IMR-90 (cell line): ENCODE measurements at regions of chr22 and their contacts with region 1.

Region 1: GRCh38 chr22:27880778-27881394 is 38.2 kb downstream of the PITPNB start:
- DNase-seq: peak; percentile 86
- ATAC-seq: peak; percentile 68
- H3K4me3 ChIP-seq: no peak overlapping the region
- H3K27ac ChIP-seq: peak overlapping the region; percentile 67; the same call in 1 of the 2 replicates
- H3K4me1 ChIP-seq: peaks cover 31% of the 10 kb centered on the region
- H3K27me3 ChIP-seq: no peaks in the 10 kb centered on the region
- CTCF ChIP-seq: peak; percentile 84
- POLR2A ChIP-seq: peak; percentile 46; the same call in 1 of the 2 replicates
- RAD21 ChIP-seq: peak; percentile 90

Region 2: DNA sequence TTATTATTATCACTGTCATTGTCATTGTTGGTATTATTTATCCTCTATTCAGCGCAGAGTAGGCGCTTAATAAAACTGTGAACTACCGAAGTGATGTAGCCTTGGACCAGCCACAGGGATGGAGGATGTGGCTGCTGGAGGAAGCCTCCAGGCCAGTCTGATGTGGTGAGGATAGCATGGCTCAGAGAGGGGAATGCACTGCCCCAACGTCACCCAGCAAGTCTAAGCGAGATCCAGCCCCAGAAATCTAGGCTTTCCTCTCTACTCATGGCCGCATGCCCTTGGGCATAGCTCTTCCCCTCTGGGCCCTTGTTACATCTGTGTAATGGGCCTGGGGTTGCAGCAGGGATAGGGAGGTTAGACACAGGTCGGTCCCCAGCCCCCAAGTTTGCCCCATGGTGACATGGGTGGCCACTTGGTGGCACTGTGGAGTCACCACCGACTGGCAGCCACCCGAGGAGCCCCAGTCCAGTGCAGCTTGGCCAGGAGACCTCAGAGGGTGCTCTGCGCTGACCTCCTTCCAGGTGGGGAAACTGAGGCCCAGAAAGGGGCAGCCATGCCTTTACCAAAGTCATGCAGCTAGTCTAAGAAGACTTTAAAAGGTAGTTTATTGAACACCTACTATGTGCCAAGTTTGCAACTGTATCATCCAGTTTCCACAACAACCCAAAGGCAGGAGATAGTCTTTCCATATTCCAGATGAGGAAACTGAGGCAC is 475.1 kb before region 1 on chr22:
- CTCF ChIA-PET with region 1: no interaction called
- POLR2A ChIA-PET with region 1: no interaction called
- dilution Hi-C with region 1: no loop called
- in situ Hi-C with region 1: no loop called
- intact Hi-C with region 1: loop called (anchors 5 kb)
- DNase-seq: peak; percentile 45
- ATAC-seq: peak; percentile 95
- H3K4me3 ChIP-seq: no peak overlapping the region
- H3K27ac ChIP-seq: no peak overlapping the region
- H3K4me1 ChIP-seq: no peaks in the 10 kb centered on the region
- H3K27me3 ChIP-seq: peaks cover 14% of the 10 kb centered on the region
- CTCF ChIP-seq: peak; percentile 79
- POLR2A ChIP-seq: peak; percentile 28; the same call in 1 of the 2 replicates
- RAD21 ChIP-seq: peak; percentile 93

Region 3: DNA sequence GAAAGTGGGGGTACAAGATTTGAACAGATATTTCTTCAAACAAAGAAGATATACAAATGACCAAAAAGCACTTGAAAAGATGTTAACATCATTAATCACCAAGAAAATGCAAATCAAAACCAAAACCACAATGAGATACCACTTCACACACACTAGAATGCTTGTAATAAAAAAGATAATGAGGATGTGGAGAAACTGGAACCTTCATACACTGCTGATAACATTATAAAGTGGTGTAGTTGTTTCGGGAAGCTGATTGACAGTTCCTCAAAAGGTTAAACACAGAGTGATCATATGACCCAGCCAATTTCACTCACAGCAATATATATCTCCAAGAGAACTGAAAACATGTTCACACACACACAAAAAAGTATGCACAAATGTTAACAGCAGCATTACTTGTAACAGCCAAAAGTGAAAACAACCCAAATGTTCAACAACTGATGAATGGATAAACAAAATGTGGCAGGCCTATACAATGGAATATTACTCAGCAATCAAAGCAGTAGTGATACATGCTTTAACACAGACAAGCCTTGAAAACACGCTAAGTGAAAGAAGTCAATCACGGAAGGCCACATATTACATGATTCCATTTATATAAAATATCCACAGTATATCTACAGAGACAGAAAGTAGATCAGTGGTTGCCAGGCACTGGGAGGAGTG is 23.1 kb after region 1 on chr22:
- CTCF ChIA-PET with region 1: interaction called, 3 read pairs
- POLR2A ChIA-PET with region 1: interaction called, 10 read pairs
- dilution Hi-C with region 1: no loop called
- in situ Hi-C with region 1: no loop called
- intact Hi-C with region 1: no loop called
- DNase-seq: no peak
- ATAC-seq: no peak
- H3K4me3 ChIP-seq: no peak overlapping the region
- H3K27ac ChIP-seq: no peak overlapping the region
- H3K4me1 ChIP-seq: peaks cover 6% of the 10 kb centered on the region
- H3K27me3 ChIP-seq: no peaks in the 10 kb centered on the region
- CTCF ChIP-seq: no peak
- POLR2A ChIP-seq: no peak
- RAD21 ChIP-seq: no peak

Region 4: DNA sequence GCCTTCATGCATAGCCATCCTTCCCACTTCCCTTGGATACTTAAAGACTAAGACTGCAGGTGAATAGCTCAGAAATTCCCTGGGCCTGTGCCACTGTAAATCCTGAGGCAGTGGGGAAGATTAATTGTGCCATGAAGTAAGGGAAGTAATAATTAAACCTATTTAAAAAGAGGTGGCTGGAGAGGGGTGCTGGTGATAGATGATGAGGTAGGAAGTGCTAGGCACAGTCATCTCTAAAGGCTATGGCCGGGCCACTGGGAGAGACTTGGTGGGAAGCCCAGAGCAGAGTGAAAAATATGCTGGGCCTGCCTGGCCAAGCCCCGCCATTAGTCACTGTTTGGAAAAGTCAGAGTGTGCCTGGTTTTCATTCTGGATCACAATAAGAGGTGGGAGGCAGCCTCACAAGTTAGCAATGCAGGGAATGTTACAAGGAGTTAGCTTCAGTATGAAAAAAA is 235.4 kb after region 1 on chr22:
- CTCF ChIA-PET with region 1: no interaction called
- POLR2A ChIA-PET with region 1: no interaction called
- dilution Hi-C with region 1: no loop called
- in situ Hi-C with region 1: no loop called
- intact Hi-C with region 1: no loop called
- DNase-seq: peak; percentile 90
- ATAC-seq: peak; percentile 88
- H3K4me3 ChIP-seq: no peak overlapping the region
- H3K27ac ChIP-seq: peak overlapping the region; percentile 40
- H3K4me1 ChIP-seq: peaks cover 25% of the 10 kb centered on the region
- H3K27me3 ChIP-seq: no peaks in the 10 kb centered on the region
- CTCF ChIP-seq: no peak
- POLR2A ChIP-seq: no peak
- RAD21 ChIP-seq: peak; percentile 26; the same call in 1 of the 2 replicates

Region 5: DNA sequence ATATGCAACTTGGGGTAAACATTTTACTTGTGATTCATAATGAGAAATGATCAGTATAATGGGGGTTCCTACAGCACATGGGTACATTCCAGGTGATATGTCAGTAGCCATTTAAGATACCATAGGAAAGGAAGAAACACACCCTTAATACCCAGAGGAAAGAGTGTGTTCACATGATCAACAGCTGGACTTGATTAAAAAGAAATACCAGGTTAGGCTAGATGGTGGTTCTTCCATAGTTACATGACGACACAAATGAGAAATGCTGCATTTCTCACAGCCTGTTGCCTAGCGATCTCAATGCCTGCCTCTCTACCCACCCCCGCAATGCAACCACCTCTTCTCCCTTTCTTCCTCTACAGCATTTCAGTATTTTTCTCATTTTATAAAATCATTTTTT is 701.9 kb after region 1 on chr22:
- CTCF ChIA-PET with region 1: no interaction called
- POLR2A ChIA-PET with region 1: no interaction called
- dilution Hi-C with region 1: no loop called
- in situ Hi-C with region 1: loop called (anchors 10 kb)
- intact Hi-C with region 1: no loop called
- DNase-seq: peak; percentile 81
- ATAC-seq: peak; percentile 91
- H3K4me3 ChIP-seq: no peak overlapping the region
- H3K27ac ChIP-seq: no peak overlapping the region
- H3K4me1 ChIP-seq: 0 out of 2 replicates have a peak, but pooled peaks cover 2% of the 10 kb centered on the region
- H3K27me3 ChIP-seq: no peaks in the 10 kb centered on the region
- CTCF ChIP-seq: no peak
- POLR2A ChIP-seq: no peak
- RAD21 ChIP-seq: no peak